ENCODE measurements at regions of chr10 and their contacts with region 1.

Region 1: DNA sequence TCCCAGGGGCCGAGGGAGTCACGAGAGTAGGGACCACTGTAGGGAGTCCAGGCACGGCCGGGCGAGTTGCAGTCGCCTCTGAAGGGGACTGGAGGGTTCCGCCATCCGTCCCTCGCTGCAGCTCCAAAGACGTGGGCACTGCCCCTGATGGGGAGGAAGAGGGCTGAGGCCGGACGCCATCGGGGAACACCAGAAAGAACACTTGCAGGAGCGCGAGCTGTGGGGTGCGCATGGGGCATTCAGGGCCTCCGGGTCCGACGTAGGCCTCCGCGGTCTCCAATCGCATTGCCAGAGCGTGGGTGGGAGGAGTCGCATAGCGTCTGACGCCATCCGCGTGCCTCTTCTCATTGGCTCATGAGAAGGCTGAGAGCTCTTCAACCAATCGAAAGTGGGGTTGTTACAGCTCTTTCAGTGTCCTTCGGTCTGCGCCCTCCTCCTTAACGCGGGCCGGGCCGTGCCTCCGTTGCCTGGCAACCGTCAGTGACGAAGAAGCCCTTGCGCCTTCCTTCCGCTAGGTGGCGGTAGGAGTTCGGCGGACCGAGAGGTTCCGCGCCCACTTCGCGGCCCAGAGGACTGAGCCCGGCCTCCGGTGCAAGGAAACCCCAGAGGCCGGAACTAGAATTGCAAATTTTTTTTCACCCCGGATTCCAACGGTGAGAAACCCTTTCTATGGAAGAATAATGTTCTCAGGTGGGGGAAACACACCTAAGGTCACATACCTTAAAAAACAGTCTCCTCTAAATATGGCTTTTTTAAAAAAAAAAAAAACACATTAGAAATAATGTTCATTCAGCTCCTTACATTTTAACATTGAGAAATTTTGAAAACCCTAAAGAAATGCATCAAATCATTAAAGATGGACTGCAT is at the start of gene TCTN3:
- DNase-seq: peak; percentile 98
- H3K4me3 Mint-ChIP-seq: peak within 1 kb of the TSS; percentile 98
- H3K27ac Mint-ChIP-seq: peak within 1 kb of the TSS; percentile 95
- H3K4me1 Mint-ChIP-seq: peaks cover 48% of the 10 kb centered on the region
- H3K27me3 Mint-ChIP-seq: no peaks in the 10 kb centered on the region
- total RNA-seq, gene TCTN3: 56.3 and 58.0 TPM in 2 replicates

Region 2: GRCh38 chr10:95561182-95562075 is 132.5 kb before region 1 on chr10 and contains the start of gene SORBS1:
- intact Hi-C with region 1: loop called (anchors 1 kb)
- DNase-seq: peak; percentile 90
- H3K4me3 Mint-ChIP-seq: peak within 1 kb of the TSS; percentile 94
- H3K27ac Mint-ChIP-seq: peak within 1 kb of the TSS; percentile 77
- H3K4me1 Mint-ChIP-seq: peaks cover 15% of the 10 kb centered on the region
- H3K27me3 Mint-ChIP-seq: peaks cover 39% of the 10 kb centered on the region
- total RNA-seq, gene SORBS1: 0.59 and 0.73 TPM in 2 replicates

Region 3: GRCh38 chr10:95792874-95793285 is 99.0 kb after region 1 on chr10:
- intact Hi-C with region 1: loop called (anchors 1 kb)
- DNase-seq: no peak
- H3K4me3 Mint-ChIP-seq: no peak overlapping the region
- H3K27ac Mint-ChIP-seq: peak overlapping the region; percentile 95
- H3K4me1 Mint-ChIP-seq: peaks cover 88% of the 10 kb centered on the region
- H3K27me3 Mint-ChIP-seq: peaks cover under 1% of the 10 kb centered on the region

Region 4: DNA sequence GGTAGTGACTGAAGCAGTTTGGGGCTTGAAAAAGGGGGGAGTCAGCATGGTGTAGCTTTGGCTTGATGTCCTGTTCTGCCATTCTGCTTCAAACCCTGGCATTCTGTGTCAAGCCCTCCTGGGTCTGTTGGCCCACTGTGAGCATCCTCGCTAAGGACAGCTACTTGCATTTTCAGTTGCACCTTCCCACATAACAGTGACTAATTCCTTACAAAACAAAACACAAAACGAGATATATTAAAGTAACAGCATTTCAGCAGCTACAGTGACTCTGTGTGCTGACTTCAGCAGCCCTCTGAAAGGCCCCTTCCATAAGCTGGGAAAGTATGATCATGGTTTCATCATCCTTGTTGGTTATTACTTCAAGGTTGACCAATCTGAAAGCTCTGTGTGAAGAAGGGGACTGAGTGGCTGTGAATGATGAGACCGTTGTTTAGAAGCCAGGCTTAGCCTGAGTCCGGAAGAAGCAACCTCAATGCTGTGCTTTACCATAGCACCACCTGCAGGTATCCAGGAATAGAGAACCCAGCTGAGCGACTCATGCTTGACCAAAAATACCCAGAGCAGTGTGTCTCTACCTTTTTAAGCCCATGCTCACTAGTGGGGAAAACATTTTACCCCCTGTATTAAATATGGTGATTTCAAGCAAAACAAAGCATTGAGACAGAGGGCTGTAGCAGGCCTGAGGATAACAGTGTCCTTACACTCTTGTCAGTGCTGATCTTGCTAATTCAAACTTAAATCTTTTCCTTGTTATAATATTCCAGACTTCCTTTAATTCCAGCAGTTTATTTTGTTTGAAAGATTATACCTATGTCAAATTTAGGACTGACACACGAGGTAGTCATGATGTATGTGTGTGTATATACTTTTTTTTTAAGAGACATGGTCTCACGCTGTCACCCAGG is 171.3 kb after region 1 on chr10:
- intact Hi-C with region 1: loop called (anchors 1 kb)
- DNase-seq: peak; percentile 57
- H3K4me3 Mint-ChIP-seq: peak overlapping the region; percentile 10
- H3K27ac Mint-ChIP-seq: peak overlapping the region; percentile 62
- H3K4me1 Mint-ChIP-seq: peaks cover 44% of the 10 kb centered on the region
- H3K27me3 Mint-ChIP-seq: no peaks in the 10 kb centered on the region

Region 5: GRCh38 chr10:96089670-96090462 is 396.0 kb after region 1 on chr10:
- intact Hi-C with region 1: loop called (anchors 1 kb)
- DNase-seq: peak; percentile 87
- H3K4me3 Mint-ChIP-seq: peak overlapping the region; percentile 90
- H3K27ac Mint-ChIP-seq: peak overlapping the region; percentile 93
- H3K4me1 Mint-ChIP-seq: peaks cover 14% of the 10 kb centered on the region
- H3K27me3 Mint-ChIP-seq: peaks cover 18% of the 10 kb centered on the region

Measured in activated T-helper 1 cell treated with anti-CD3 and anti-CD28 coated beads, Interleukin-12 subunit alpha, Interleukin-12 subunit beta, Interleukin-2, Interleukin-4 antibody, amounts not matched to agents 30 ng/mL and 10 ng/mL and 1 ng/mL, durations not matched to agents 14 hours and 24 hours and 36 hours (primary cell).